GM12878 (cell line): ENCODE measurements at regions of chr15 and their contacts with region 1.

Region 1: DNA sequence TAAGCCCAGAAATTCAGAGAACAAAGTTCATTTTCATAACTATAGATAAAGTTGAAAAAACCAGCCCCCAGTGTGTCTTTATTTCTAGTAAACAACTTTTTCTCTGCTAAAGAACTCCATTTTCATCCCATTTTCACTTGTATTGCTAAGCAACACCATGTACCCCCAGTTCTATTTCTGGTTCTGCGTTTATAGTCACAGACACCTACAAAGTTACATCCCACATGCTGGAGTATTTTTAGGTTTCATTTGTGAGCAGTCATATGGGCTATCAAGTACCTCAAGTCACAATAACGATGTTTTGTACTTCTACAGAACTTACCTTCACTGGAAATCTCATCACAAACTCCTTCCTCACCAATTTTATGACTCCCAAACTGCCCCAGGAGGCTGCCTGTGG is 236.5 kb downstream of the RSL24D1 start:
- DNase-seq: no peak
- ATAC-seq: no peak
- H3K4me3 ChIP-seq: no peak overlapping the region
- H3K27ac ChIP-seq: no peak overlapping the region
- H3K4me1 ChIP-seq: no peaks in the 10 kb centered on the region
- H3K27me3 ChIP-seq: no peaks in the 10 kb centered on the region
- CTCF ChIP-seq: no peak
- EP300 ChIP-seq: no peak
- POLR2A ChIP-seq: no peak
- RAD21 ChIP-seq: no peak

Region 2: GRCh38 chr15:54941417-54941816 is 18.8 kb before region 1 on chr15:
- CTCF ChIA-PET with region 1: interaction called, 5 read pairs
- POLR2A ChIA-PET with region 1: no interaction called
- RAD21 ChIA-PET with region 1: no interaction called
- SMC1A ChIA-PET with region 1: interaction called, 10 read pairs
- in situ Hi-C with region 1: no loop called
- intact Hi-C with region 1: no loop called
- DNase-seq: no peak
- ATAC-seq: no peak
- H3K4me3 ChIP-seq: no peak overlapping the region
- H3K27ac ChIP-seq: no peak overlapping the region
- H3K4me1 ChIP-seq: no peaks in the 10 kb centered on the region
- H3K27me3 ChIP-seq: no peaks in the 10 kb centered on the region
- CTCF ChIP-seq: no peak
- EP300 ChIP-seq: no peak
- POLR2A ChIP-seq: no peak
- RAD21 ChIP-seq: no peak

Region 3: GRCh38 chr15:54979964-54980363 is 19.7 kb after region 1 on chr15:
- CTCF ChIA-PET with region 1: interaction called, 9 read pairs
- POLR2A ChIA-PET with region 1: no interaction called
- RAD21 ChIA-PET with region 1: interaction called, 3 read pairs
- SMC1A ChIA-PET with region 1: interaction called, 11 read pairs
- in situ Hi-C with region 1: no loop called
- intact Hi-C with region 1: no loop called
- DNase-seq: no peak
- ATAC-seq: no peak
- H3K4me3 ChIP-seq: no peak overlapping the region
- H3K27ac ChIP-seq: no peak overlapping the region
- H3K4me1 ChIP-seq: no peaks in the 10 kb centered on the region
- H3K27me3 ChIP-seq: no peaks in the 10 kb centered on the region
- CTCF ChIP-seq: no peak
- EP300 ChIP-seq: no peak
- POLR2A ChIP-seq: no peak
- RAD21 ChIP-seq: no peak

Region 4: DNA sequence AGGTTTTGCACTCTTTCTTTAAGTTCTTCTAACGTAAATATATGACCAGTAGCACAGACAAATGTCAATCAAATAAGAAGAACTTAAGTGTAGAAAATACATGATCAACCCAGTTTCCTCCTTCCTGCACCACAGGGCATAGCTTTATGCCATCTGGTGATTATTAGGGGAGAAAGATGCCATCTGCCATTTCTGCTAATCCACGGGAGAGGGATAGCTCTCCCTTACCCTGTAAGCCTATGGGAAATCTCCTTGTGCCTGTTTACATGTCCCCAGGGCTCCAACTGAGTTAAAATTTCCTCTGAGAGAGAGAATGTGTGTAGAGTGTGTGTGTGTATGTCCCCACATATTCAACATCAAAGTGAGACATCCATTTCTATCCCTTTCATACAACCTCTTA is 100.6 kb after region 1 on chr15:
- CTCF ChIA-PET with region 1: no interaction called
- POLR2A ChIA-PET with region 1: no interaction called
- RAD21 ChIA-PET with region 1: no interaction called
- SMC1A ChIA-PET with region 1: no interaction called
- in situ Hi-C with region 1: no loop called
- intact Hi-C with region 1: no loop called
- DNase-seq: no peak
- ATAC-seq: no peak
- H3K4me3 ChIP-seq: no peak overlapping the region
- H3K27ac ChIP-seq: no peak overlapping the region
- H3K4me1 ChIP-seq: no peaks in the 10 kb centered on the region
- H3K27me3 ChIP-seq: no peaks in the 10 kb centered on the region
- CTCF ChIP-seq: no peak
- EP300 ChIP-seq: no peak
- POLR2A ChIP-seq: no peak
- RAD21 ChIP-seq: no peak